ENCODE measurements at regions of chr3 and their contacts with region 1.

Region 1: GRCh38 chr3:99842826-99843589 is 25.3 kb downstream of the CMSS1 start:
- DNase-seq: no peak
- H3K4me3 Mint-ChIP-seq: no peak overlapping the region
- H3K27ac Mint-ChIP-seq: no peak overlapping the region
- H3K4me1 Mint-ChIP-seq: peaks cover 19% of the 10 kb centered on the region
- H3K27me3 Mint-ChIP-seq: no peaks in the 10 kb centered on the region
- CTCF ChIP-seq: peak; percentile 21

Region 2: GRCh38 chr3:99952306-99952705 is 109.3 kb after region 1 on chr3:
- CTCF ChIA-PET with region 1: interaction called, 4 read pairs
- intact Hi-C with region 1: loop called (anchors 5 kb)
- DNase-seq: no peak
- H3K4me3 Mint-ChIP-seq: no peak overlapping the region
- H3K27ac Mint-ChIP-seq: no peak overlapping the region
- H3K4me1 Mint-ChIP-seq: peaks cover 65% of the 10 kb centered on the region
- H3K27me3 Mint-ChIP-seq: no peaks in the 10 kb centered on the region
- CTCF ChIP-seq: no peak

Region 3: GRCh38 chr3:99984139-99984538 is 141.1 kb after region 1 on chr3:
- CTCF ChIA-PET with region 1: no interaction called
- intact Hi-C with region 1: no loop called
- DNase-seq: no peak
- H3K4me3 Mint-ChIP-seq: no peak overlapping the region
- H3K27ac Mint-ChIP-seq: no peak overlapping the region
- H3K4me1 Mint-ChIP-seq: peaks cover 12% of the 10 kb centered on the region
- H3K27me3 Mint-ChIP-seq: no peaks in the 10 kb centered on the region
- CTCF ChIP-seq: no peak

Region 4: GRCh38 chr3:100006570-100007271 is 163.7 kb after region 1 on chr3:
- CTCF ChIA-PET with region 1: interaction called, 6 read pairs
- intact Hi-C with region 1: loop called (anchors 5 kb)
- DNase-seq: no peak
- H3K4me3 Mint-ChIP-seq: no peak overlapping the region
- H3K27ac Mint-ChIP-seq: peak overlapping the region; percentile 62
- H3K4me1 Mint-ChIP-seq: peaks cover 72% of the 10 kb centered on the region
- H3K27me3 Mint-ChIP-seq: no peaks in the 10 kb centered on the region
- CTCF ChIP-seq: no peak

Region 5: GRCh38 chr3:100047455-100048141 is 204.6 kb after region 1 on chr3:
- CTCF ChIA-PET with region 1: interaction called, 3 read pairs
- intact Hi-C with region 1: loop called (anchors 10 kb)
- DNase-seq: peak; percentile 37
- H3K4me3 Mint-ChIP-seq: peak overlapping the region; percentile 49
- H3K27ac Mint-ChIP-seq: peak overlapping the region; percentile 84
- H3K4me1 Mint-ChIP-seq: peaks cover 57% of the 10 kb centered on the region
- H3K27me3 Mint-ChIP-seq: no peaks in the 10 kb centered on the region
- CTCF ChIP-seq: no peak

Region 6: GRCh38 chr3:100089812-100090668 is 247.0 kb after region 1 on chr3:
- CTCF ChIA-PET with region 1: no interaction called
- intact Hi-C with region 1: loop called (anchors 10 kb)
- DNase-seq: peak; percentile 49
- H3K4me3 Mint-ChIP-seq: no peak overlapping the region
- H3K27ac Mint-ChIP-seq: no peak overlapping the region
- H3K4me1 Mint-ChIP-seq: peaks cover 23% of the 10 kb centered on the region
- H3K27me3 Mint-ChIP-seq: no peaks in the 10 kb centered on the region
- CTCF ChIP-seq: peak; percentile 33

Region 7: DNA sequence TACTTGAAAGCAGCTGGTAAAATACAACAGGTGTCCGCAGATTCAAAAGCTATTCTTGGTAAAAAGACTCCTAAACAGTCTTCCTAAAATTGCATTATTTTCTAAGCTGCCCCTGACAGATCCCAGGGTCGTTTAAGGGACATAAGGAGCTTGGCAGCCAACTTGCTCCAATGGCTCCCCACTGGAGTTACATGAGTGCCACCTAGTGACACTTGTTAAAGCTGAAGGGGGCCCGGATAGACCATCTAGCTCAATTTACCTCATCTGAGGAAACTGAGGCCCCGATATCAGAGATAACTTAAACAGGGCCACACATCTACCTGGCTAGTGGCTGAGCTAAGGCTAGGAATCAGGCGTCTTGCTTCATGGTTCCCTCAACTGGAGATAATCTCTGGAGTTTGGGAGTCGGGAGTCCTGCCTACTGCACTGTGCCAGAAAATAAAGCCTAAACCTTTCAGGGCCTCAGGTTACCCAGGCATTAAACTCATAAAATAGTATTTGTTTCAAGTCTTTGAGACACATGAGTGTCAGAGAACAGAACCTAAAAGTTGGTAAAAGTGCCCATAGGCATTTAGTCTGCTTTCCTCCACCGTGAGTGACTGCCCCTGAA is 411.3 kb after region 1 on chr3:
- CTCF ChIA-PET with region 1: interaction called, 25 read pairs
- intact Hi-C with region 1: loop called (anchors 1 kb)
- DNase-seq: peak; percentile 63
- H3K4me3 Mint-ChIP-seq: no peak overlapping the region
- H3K27ac Mint-ChIP-seq: no peak overlapping the region
- H3K4me1 Mint-ChIP-seq: no peaks in the 10 kb centered on the region
- H3K27me3 Mint-ChIP-seq: no peaks in the 10 kb centered on the region
- CTCF ChIP-seq: peak; percentile 72

Measured in Calu3 (cell line).